Activated T-helper 1 cell treated with anti-CD3 and anti-CD28 coated beads, Interleukin-12 subunit alpha, Interleukin-12 subunit beta, Interleukin-2, Interleukin-4 antibody, amounts not matched to agents 30 ng/mL and 10 ng/mL and 1 ng/mL, durations not matched to agents 14 hours and 24 hours and 36 hours (primary cell): ENCODE measurements at regions of chr10 and their contacts with region 1.

Region 1: GRCh38 chr10:97425964-97426775 is at the start of gene PGAM1:
- DNase-seq: peak; percentile 98
- H3K4me3 Mint-ChIP-seq: peak within 1 kb of the TSS; percentile 94
- H3K27ac Mint-ChIP-seq: peak within 1 kb of the TSS; percentile 99
- H3K4me1 Mint-ChIP-seq: peaks cover 46% of the 10 kb centered on the region
- H3K27me3 Mint-ChIP-seq: peaks cover 2% of the 10 kb centered on the region
- total RNA-seq, gene PGAM1: 967 and 979 TPM in 2 replicates

Region 2: DNA sequence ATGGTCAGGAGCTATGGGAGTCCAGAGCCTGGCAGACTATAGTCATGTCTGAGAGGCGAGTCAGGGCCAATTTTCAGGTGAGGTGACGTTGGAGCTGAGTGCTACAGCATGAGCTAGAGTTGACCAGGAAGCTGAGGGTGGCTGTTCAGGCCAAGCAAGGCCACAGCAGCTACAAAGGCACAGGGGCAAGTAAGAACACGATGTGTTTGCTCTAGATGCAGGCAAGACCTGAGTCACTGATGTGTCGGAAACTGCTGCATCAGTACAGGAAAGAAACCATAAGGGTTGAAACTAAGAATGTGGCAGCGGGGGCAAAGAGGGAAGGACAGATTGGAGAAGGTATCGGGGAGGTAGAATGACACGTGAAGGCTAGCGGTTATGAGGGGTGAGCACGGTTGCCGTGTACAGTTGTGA is 13.3 kb before region 1 on chr10:
- intact Hi-C with region 1: loop called (anchors 1 kb)
- DNase-seq: peak; percentile 52
- H3K4me3 Mint-ChIP-seq: peak overlapping the region; percentile 47
- H3K27ac Mint-ChIP-seq: peak overlapping the region; percentile 95
- H3K4me1 Mint-ChIP-seq: peaks cover 55% of the 10 kb centered on the region
- H3K27me3 Mint-ChIP-seq: no peaks in the 10 kb centered on the region